ENCODE measurements at regions of chr19 and their contacts with region 1.

Region 1: DNA sequence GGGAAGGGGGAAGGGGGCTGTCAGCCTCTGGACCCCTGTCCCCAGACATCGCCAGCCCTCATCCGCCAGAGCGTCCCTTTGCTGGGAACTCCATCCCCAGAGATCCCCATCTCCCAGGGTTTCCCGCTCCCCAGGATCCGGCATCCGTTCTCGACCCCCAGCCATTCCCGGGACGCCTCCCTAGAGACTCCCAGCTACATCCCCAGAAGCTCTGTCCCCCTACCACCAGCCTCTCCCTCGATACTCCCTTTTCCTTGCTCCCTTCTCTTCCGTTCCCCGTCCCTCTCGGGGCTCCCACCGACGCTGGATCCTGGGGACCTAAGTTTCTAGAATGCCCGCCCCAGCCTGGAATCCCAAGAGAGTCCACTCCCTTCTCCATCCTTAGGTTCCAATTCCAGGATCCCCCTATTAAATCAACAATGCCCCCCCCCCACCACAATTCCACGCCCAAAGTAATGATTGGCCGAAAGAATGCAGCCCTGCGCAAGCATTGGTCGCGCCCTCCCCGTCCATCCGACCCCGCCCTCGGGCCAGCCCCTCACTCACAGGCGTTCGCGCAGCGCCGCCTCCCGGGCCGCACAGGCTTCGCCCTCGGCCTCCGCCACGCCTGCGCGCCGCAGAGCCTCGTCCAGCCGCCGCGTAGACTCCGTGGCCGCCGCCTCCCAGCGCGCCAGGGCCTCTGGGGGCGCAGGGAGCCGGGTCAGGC is 3.2 kb downstream of the CCDC194 start:
- DNase-seq: peak; percentile 83 to 86 (median 83)
- H3K4me3 ChIP-seq: peak overlapping the region; percentile 29 to 63
- H3K4me3 Mint-ChIP-seq: peak overlapping the region; percentile 88 to 94 (median 91)
- H3K27ac ChIP-seq: peak overlapping the region; percentile 34
- H3K27ac Mint-ChIP-seq: peak overlapping the region; percentile 30 to 94 (median 64)
- H3K4me1 ChIP-seq: peaks cover 27% of the 10 kb centered on the region
- H3K4me1 Mint-ChIP-seq: peaks cover 14 to 24% (median 19%) of the 10 kb centered on the region in 4 donors
- H3K27me3 ChIP-seq: no peaks in the 10 kb centered on the region
- H3K27me3 Mint-ChIP-seq: no peaks in the 10 kb centered on the region

Region 2: DNA sequence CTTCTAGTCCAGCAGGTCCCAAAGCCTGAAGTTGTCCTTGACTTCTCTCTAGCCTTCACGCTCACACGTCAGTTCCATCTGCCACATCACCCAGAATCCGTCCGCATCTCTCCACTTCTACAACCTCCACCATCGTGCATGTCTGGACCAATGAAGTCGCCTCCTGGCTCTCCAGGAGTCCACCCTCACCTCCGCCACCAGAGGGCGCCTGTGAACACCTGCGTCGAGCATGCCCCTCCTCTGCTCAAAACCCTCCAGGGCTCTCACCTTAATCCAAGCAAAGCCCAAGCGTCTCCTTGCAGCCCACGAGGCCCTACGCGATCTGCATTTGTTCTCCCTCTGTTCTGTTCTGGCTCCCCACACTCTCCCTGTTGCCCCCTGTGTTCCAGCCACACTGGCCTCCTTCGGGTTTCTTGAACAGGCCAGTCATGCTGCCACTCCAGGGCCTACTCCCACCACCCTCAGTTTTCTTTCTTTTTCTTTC is 129.9 kb before region 1 on chr19:
- CTCF ChIA-PET with region 1: interaction called, 65 read pairs
- POLR2A ChIA-PET with region 1: interaction called, 3 read pairs
- intact Hi-C with region 1: no loop called
- DNase-seq: peak; percentile 85 to 88 (median 87)
- H3K4me3 ChIP-seq: no peak overlapping the region
- H3K4me3 Mint-ChIP-seq: no peak overlapping the region
- H3K27ac ChIP-seq: no peak overlapping the region
- H3K27ac Mint-ChIP-seq: peak overlapping the region in 5 of 7 donors; percentile 1 to 82 (median 47)
- H3K4me1 ChIP-seq: peaks cover 14% of the 10 kb centered on the region
- H3K4me1 Mint-ChIP-seq: peaks cover 5 to 22% (median 16%) of the 10 kb centered on the region in 4 donors
- H3K27me3 ChIP-seq: no peaks in the 10 kb centered on the region
- H3K27me3 Mint-ChIP-seq: no peaks in the 10 kb centered on the region

Region 3: GRCh38 chr19:17336872-17337722 is 53.7 kb before region 1 on chr19 and contains the start of gene GTPBP3:
- CTCF ChIA-PET with region 1: interaction called, 8 read pairs
- POLR2A ChIA-PET with region 1: interaction called, 6 read pairs
- intact Hi-C with region 1: loop called (anchors 1 kb)
- DNase-seq: peak; percentile 93 to 99 (median 97)
- H3K4me3 ChIP-seq: peak within 1 kb of the TSS; percentile 52 to 99
- H3K4me3 Mint-ChIP-seq: peak within 1 kb of the TSS; percentile 90 to 98 (median 94)
- H3K27ac ChIP-seq: peak within 1 kb of the TSS; percentile 84
- H3K27ac Mint-ChIP-seq: peak within 1 kb of the TSS; percentile 90 to 99 (median 97)
- H3K4me1 ChIP-seq: peaks cover 47% of the 10 kb centered on the region
- H3K4me1 Mint-ChIP-seq: peaks cover 18 to 53% (median 32%) of the 10 kb centered on the region in 4 donors
- H3K27me3 ChIP-seq: no peaks in the 10 kb centered on the region
- H3K27me3 Mint-ChIP-seq: no peaks in the 10 kb centered on the region
- total RNA-seq, gene GTPBP3: 53.7 to 58.4 TPM

Region 4: DNA sequence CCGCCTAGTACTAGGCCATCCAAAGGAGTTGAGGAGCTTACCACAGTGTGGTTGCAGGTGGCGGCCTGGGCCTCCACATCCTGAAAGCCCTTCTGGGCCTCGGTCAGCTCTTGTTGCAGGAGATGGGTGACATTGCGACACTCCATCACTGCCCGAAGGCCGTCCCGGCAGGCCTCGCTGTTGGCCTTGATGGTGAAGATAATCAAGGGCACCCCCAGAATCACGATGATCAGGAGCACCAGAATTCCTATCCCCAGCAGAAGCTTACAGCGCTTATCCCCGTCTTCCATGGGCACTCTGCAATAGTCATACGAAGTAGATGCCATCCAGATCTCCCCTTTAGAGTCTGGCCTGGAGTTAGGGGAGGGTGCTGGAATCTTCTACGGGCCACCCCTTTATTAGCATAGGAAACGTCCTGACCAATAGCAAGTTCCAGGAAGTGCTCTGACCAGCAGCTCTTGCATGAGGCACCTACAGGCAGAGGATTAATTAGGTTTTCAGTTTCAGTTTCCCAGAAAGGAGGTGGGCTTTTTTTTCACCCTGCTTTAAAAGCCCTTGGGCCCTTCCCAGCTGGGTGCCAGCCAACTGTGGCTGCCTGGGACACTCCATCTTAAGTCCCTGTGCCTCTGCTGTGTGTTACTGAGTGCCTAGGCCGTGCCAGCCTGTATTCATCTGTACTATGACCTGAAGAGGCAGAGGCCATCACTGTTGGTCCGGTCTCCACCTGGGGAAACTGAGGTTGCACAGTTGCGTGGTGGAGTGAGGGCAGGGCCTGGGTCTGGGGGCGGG is 14.6 kb after region 1 on chr19 and contains the start of gene BST2:
- CTCF ChIA-PET with region 1: interaction called, 25 read pairs
- POLR2A ChIA-PET with region 1: interaction called, 8 read pairs
- intact Hi-C with region 1: no loop called
- DNase-seq: peak; percentile 60 to 80 (median 65)
- H3K4me3 ChIP-seq: peak within 1 kb of the TSS; percentile 93 to 98
- H3K4me3 Mint-ChIP-seq: peak within 1 kb of the TSS; percentile 94 to 98 (median 94)
- H3K27ac ChIP-seq: peak within 1 kb of the TSS; percentile 88
- H3K27ac Mint-ChIP-seq: peak within 1 kb of the TSS; percentile 93 to 96 (median 94)
- H3K4me1 ChIP-seq: peaks cover 32% of the 10 kb centered on the region
- H3K4me1 Mint-ChIP-seq: peaks cover 20 to 45% (median 29%) of the 10 kb centered on the region in 4 donors
- H3K27me3 ChIP-seq: no peaks in the 10 kb centered on the region
- H3K27me3 Mint-ChIP-seq: no peaks in the 10 kb centered on the region
- total RNA-seq, gene BST2: 55.9 TPM

Region 5: GRCh38 chr19:17448131-17448967 is 57.5 kb after region 1 on chr19 and contains the start of gene TMEM221:
- CTCF ChIA-PET with region 1: interaction called, 9 read pairs
- POLR2A ChIA-PET with region 1: interaction called, 4 read pairs
- intact Hi-C with region 1: loop called (anchors 1 kb)
- DNase-seq: peak; percentile 41 to 60 (median 51)
- H3K4me3 ChIP-seq: peak within 1 kb of the TSS in 1 of 2 donors; percentile 32
- H3K4me3 Mint-ChIP-seq: peak within 1 kb of the TSS; percentile 27 to 71 (median 60)
- H3K27ac ChIP-seq: no peak within 1 kb of the TSS
- H3K27ac Mint-ChIP-seq: no peak within 1 kb of the TSS
- H3K4me1 ChIP-seq: peaks cover 11% of the 10 kb centered on the region
- H3K4me1 Mint-ChIP-seq: peaks cover 5 to 15% (median 7%) of the 10 kb centered on the region in 4 donors
- H3K27me3 ChIP-seq: no peaks in the 10 kb centered on the region
- H3K27me3 Mint-ChIP-seq: peaks cover 10 to 13% of the 10 kb centered on the region in 2 donors
- total RNA-seq, gene TMEM221: not detected

Region 6: DNA sequence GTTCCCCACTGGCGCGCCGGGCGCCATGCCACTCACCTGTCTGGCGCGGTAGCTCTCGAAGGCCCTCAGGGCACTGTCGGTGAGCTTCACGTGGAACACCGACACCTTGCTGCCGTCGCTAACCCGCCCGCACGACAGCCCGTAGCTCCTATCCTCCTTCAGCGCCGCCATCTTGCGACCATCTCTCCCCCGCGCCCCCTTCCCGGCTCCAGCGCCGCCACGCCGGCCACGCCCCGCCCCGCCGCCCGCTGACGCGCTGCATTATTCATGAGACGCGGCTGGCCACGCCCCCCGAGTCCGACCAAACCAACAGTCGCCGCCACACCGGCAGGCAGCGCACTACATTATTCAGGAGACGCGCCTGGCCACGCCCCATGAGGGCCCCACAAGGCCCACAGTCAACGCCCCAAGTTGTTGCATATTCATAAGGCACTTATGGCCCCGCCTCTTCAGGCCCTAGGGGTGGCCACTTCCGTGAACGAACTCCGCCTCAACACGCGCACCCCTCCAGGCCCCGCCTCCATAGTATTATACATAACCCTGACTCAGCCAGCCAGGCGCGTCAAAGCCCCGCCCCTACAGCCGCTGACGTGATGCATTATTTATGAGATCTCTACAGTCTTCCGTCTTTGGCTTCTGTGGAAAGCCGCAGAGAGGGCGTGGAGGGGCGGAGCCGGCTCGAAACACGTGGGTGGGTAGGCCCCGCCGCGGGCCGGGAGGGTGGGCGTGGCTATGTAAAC is 1131.2 kb after region 1 on chr19 and contains the start of gene ELL:
- CTCF ChIA-PET with region 1: no interaction called
- POLR2A ChIA-PET with region 1: no interaction called
- intact Hi-C with region 1: no loop called
- DNase-seq: peak; percentile 100
- H3K4me3 ChIP-seq: peak within 1 kb of the TSS; percentile 88 to 96
- H3K4me3 Mint-ChIP-seq: peak within 1 kb of the TSS; percentile 93 to 100 (median 98)
- H3K27ac ChIP-seq: peak within 1 kb of the TSS; percentile 96
- H3K27ac Mint-ChIP-seq: peak within 1 kb of the TSS; percentile 94 to 99 (median 98)
- H3K4me1 ChIP-seq: peaks cover 33% of the 10 kb centered on the region
- H3K4me1 Mint-ChIP-seq: peaks cover 6 to 36% (median 22%) of the 10 kb centered on the region in 4 donors
- H3K27me3 ChIP-seq: no peaks in the 10 kb centered on the region
- H3K27me3 Mint-ChIP-seq: no peaks in the 10 kb centered on the region
- total RNA-seq, gene ELL: 34.9 to 35.9 TPM

Measured in CD4-positive, alpha-beta memory T cell (primary cell).